Caco-2 (cell line): ENCODE measurements at regions of chr15 and their contacts with region 1.

Region 1: DNA sequence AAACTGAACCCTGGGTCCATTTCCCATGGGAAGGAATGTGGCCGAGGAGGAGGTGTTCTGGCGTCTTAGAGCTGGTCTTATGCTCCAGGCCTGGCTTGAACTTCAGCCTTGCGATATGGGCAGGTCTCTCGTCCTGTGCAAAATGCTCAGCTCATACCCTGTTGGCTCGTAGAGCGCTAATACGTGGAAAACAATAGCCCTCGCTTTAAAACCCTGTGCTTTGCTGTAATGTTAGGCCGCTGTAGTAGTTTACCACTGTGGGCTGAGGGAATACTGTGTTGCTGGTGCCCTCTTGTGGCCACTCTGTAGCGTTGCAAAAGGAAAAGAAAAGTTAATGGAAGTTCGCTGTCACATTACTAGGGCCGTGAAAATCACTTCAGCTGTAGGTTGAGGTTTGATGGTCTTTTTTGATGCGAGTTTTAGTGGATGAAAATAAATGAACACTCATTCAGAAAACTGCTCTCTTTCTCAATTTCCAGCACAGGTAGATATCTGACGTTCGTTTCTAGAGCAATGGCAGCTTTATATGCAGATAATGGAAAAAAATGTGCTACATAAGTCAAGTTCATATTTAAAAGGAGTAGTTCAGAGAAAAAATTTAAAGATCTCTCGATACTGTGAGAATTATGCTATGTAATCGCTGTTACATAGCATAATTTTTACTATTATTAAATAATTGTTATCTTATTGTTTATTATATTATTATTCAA is 92.9 kb downstream of the MCTP2 start:
- DNase-seq: peak in 1 of 2 experiments; percentile 50
- H3K4me3 ChIP-seq: no peak overlapping the region
- H3K4me3 Mint-ChIP-seq: no peak overlapping the region
- H3K27ac Mint-ChIP-seq: no peak overlapping the region
- H3K4me1 ChIP-seq: no peaks in the 10 kb centered on the region
- H3K4me1 Mint-ChIP-seq: no peaks in the 10 kb centered on the region
- H3K27me3 ChIP-seq: no peaks in the 10 kb centered on the region
- H3K27me3 Mint-ChIP-seq: no peaks in the 10 kb centered on the region
- CTCF ChIP-seq: peak; percentile 82 to 90

Region 2: GRCh38 chr15:94163999-94164807 is 160.1 kb before region 1 on chr15:
- CTCF ChIA-PET with region 1: interaction called, 38 read pairs
- POLR2A ChIA-PET with region 1: no interaction called
- intact Hi-C with region 1: loop called (anchors 1 kb)
- DNase-seq: peak; percentile 53 to 80
- H3K4me3 ChIP-seq: no peak overlapping the region
- H3K4me3 Mint-ChIP-seq: no peak overlapping the region
- H3K27ac Mint-ChIP-seq: no peak overlapping the region
- H3K4me1 ChIP-seq: no peaks in the 10 kb centered on the region
- H3K4me1 Mint-ChIP-seq: no peaks in the 10 kb centered on the region
- H3K27me3 ChIP-seq: no peaks in the 10 kb centered on the region
- H3K27me3 Mint-ChIP-seq: peaks cover 2% of the 10 kb centered on the region
- CTCF ChIP-seq: peak; percentile 81 to 88

Region 3: GRCh38 chr15:94230956-94231722 is 93.1 kb before region 1 on chr15 and contains the start of gene MCTP2:
- CTCF ChIA-PET with region 1: interaction called, 8 read pairs
- POLR2A ChIA-PET with region 1: no interaction called
- intact Hi-C with region 1: loop called (anchors 1 kb)
- DNase-seq: peak; percentile 86 to 91
- H3K4me3 ChIP-seq: peak within 1 kb of the TSS; percentile 72
- H3K4me3 Mint-ChIP-seq: peak within 1 kb of the TSS; percentile 75
- H3K27ac Mint-ChIP-seq: peak within 1 kb of the TSS; percentile 73
- H3K4me1 ChIP-seq: 0 out of 2 replicates have a peak, but pooled peaks cover 5% of the 10 kb centered on the region
- H3K4me1 Mint-ChIP-seq: no peaks in the 10 kb centered on the region
- H3K27me3 ChIP-seq: no peaks in the 10 kb centered on the region
- H3K27me3 Mint-ChIP-seq: no peaks in the 10 kb centered on the region
- CTCF ChIP-seq: peak in 1 of 2 experiments; percentile 36
- total RNA-seq, gene MCTP2: 9.9 and 10.9 TPM in 2 replicates

Region 4: DNA sequence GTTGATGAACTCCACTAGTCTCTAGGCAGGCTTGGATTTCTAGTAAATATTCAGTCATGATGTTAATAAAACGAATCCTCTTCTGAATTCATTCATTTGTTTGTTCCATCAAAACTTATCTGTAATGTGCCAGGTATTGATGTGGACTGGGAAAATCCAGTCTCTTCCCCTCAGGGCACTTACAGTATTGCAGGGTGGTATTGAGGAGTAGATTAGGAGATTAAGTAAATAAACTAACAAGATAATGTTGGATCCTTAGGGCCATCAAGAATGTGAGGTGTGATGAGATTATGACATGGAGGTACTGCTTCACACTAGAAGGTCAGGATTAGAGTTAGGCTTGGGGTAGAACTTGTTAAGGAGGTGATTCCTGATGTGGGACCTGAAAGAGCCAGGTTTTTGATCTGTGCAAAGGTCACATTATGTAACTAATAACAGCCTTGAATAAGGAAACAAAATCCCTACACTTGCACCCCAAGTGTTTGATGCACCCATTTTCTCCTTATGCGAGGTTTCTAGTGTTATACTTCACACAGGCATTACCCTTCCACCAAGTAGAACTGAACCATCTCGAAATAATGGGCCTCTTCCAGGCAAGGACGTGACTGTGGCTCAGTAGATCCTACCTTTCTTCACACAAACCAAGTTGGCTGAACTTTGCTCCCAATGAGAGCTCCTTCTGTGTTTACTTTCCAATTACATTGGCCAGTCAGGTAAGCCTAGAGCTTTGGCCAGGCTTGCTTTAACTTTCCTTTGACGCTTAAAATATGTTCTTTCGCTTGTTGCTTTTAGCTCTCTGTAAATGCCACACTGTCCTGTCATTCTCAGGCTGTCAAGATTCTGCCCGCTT is 76.3 kb before region 1 on chr15:
- CTCF ChIA-PET with region 1: interaction called, 3 read pairs
- POLR2A ChIA-PET with region 1: no interaction called
- intact Hi-C with region 1: loop called (anchors 2 kb)
- DNase-seq: peak; percentile 60 to 63
- H3K4me3 ChIP-seq: peak overlapping the region; percentile 26
- H3K4me3 Mint-ChIP-seq: peak overlapping the region; percentile 28
- H3K27ac Mint-ChIP-seq: peak overlapping the region; percentile 55
- H3K4me1 ChIP-seq: peaks cover 35% of the 10 kb centered on the region
- H3K4me1 Mint-ChIP-seq: peaks cover 32% of the 10 kb centered on the region
- H3K27me3 ChIP-seq: no peaks in the 10 kb centered on the region
- H3K27me3 Mint-ChIP-seq: no peaks in the 10 kb centered on the region
- CTCF ChIP-seq: no peak

Region 5: DNA sequence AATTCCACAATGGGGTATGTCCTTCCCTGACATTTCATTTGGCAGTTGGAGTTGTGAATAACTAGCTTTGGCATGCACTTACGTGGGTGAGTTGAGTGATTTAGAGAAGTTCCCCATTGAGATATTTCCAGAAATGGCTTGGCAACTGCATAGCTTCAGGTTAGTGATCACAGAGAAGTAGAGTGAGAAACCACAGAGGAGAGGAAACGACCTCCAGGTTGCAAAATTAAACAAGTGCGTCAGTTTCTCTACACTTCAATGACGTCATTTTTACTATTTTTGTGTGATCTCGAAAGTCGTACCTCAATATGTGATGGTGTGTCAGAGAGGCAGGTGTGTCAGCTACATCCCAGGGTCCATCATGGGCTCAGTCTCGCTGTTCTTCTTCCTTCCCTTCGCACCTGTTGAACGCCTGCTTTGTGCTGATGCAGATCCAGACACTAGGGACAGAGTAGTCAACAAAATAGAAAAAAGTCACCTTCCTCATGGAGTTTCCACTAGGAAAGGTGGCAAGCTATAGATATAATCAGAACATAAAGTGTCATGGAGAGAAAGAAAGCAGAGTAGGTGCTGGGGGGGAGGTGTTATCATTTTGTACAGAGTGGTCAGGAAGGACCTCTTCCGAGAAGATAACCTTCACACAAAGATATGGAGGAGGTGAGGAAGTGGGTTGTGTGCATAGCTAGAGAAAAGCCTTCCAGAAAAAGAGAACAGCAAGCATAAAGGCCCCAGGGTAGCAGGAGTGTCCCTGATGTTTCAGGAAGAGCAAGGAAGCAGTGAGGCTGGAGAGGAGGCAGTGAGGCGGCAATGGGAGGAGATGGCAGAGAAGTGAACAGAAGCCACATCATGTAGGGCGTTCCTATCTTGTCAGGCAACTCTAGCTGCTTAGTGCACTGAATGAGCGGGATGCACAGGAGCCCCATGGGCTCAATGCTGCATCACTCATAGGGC is 17.3 kb before region 1 on chr15:
- CTCF ChIA-PET with region 1: no interaction called
- POLR2A ChIA-PET with region 1: no interaction called
- intact Hi-C with region 1: no loop called
- DNase-seq: no peak
- H3K4me3 ChIP-seq: no peak overlapping the region
- H3K4me3 Mint-ChIP-seq: no peak overlapping the region
- H3K27ac Mint-ChIP-seq: no peak overlapping the region
- H3K4me1 ChIP-seq: no peaks in the 10 kb centered on the region
- H3K4me1 Mint-ChIP-seq: no peaks in the 10 kb centered on the region
- H3K27me3 ChIP-seq: no peaks in the 10 kb centered on the region
- H3K27me3 Mint-ChIP-seq: no peaks in the 10 kb centered on the region
- CTCF ChIP-seq: no peak

Region 6: GRCh38 chr15:94467034-94467433 is 142.8 kb after region 1 on chr15:
- CTCF ChIA-PET with region 1: interaction called, 10 read pairs
- POLR2A ChIA-PET with region 1: no interaction called
- intact Hi-C with region 1: loop called (anchors 1 kb)
- DNase-seq: peak in 1 of 2 experiments; percentile 22
- H3K4me3 ChIP-seq: no peak overlapping the region
- H3K4me3 Mint-ChIP-seq: no peak overlapping the region
- H3K27ac Mint-ChIP-seq: no peak overlapping the region
- H3K4me1 ChIP-seq: no peaks in the 10 kb centered on the region
- H3K4me1 Mint-ChIP-seq: no peaks in the 10 kb centered on the region
- H3K27me3 ChIP-seq: no peaks in the 10 kb centered on the region
- H3K27me3 Mint-ChIP-seq: no peaks in the 10 kb centered on the region
- CTCF ChIP-seq: peak in 1 of 2 experiments; percentile 32

Region 7: GRCh38 chr15:94509259-94509658 is 185.0 kb after region 1 on chr15:
- CTCF ChIA-PET with region 1: no interaction called
- POLR2A ChIA-PET with region 1: no interaction called
- intact Hi-C with region 1: no loop called
- DNase-seq: no peak
- H3K4me3 ChIP-seq: no peak overlapping the region
- H3K4me3 Mint-ChIP-seq: no peak overlapping the region
- H3K27ac Mint-ChIP-seq: no peak overlapping the region
- H3K4me1 ChIP-seq: no peaks in the 10 kb centered on the region
- H3K4me1 Mint-ChIP-seq: no peaks in the 10 kb centered on the region
- H3K27me3 ChIP-seq: no peaks in the 10 kb centered on the region
- H3K27me3 Mint-ChIP-seq: peaks cover 9% of the 10 kb centered on the region
- CTCF ChIP-seq: no peak